Naive thymus-derived CD4-positive, alpha-beta T cell (primary cell): ENCODE measurements at regions of chr19 and their contacts with region 1.

Region 1: DNA sequence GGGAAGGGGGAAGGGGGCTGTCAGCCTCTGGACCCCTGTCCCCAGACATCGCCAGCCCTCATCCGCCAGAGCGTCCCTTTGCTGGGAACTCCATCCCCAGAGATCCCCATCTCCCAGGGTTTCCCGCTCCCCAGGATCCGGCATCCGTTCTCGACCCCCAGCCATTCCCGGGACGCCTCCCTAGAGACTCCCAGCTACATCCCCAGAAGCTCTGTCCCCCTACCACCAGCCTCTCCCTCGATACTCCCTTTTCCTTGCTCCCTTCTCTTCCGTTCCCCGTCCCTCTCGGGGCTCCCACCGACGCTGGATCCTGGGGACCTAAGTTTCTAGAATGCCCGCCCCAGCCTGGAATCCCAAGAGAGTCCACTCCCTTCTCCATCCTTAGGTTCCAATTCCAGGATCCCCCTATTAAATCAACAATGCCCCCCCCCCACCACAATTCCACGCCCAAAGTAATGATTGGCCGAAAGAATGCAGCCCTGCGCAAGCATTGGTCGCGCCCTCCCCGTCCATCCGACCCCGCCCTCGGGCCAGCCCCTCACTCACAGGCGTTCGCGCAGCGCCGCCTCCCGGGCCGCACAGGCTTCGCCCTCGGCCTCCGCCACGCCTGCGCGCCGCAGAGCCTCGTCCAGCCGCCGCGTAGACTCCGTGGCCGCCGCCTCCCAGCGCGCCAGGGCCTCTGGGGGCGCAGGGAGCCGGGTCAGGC is 3.2 kb downstream of the CCDC194 start:
- DNase-seq: peak; percentile 77 to 93 (median 85)
- ATAC-seq: peak; percentile 100
- H3K4me3 ChIP-seq: peak overlapping the region; percentile 84
- H3K4me3 Mint-ChIP-seq: peak overlapping the region; percentile 85 to 98 (median 92)
- H3K27ac ChIP-seq: peak overlapping the region; percentile 2
- H3K27ac Mint-ChIP-seq: peak overlapping the region in 5 of 9 donors; percentile 28 to 92 (median 61)
- H3K4me1 ChIP-seq: peaks cover 15 to 18% of the 10 kb centered on the region in 2 donors
- H3K4me1 Mint-ChIP-seq: peaks cover 6 to 30% (median 20%) of the 10 kb centered on the region in 7 donors
- H3K27me3 ChIP-seq: no peaks in the 10 kb centered on the region
- H3K27me3 Mint-ChIP-seq: peaks cover 0 to 28% (median 0%) of the 10 kb centered on the region in 5 donors

Region 2: GRCh38 chr19:16688084-16688483 is 702.7 kb before region 1 on chr19:
- CTCF ChIA-PET with region 1: no interaction called
- POLR2A ChIA-PET with region 1: no interaction called
- intact Hi-C with region 1: no loop called
- DNase-seq: no peak
- ATAC-seq: no peak
- H3K4me3 ChIP-seq: no peak overlapping the region
- H3K4me3 Mint-ChIP-seq: no peak overlapping the region
- H3K27ac ChIP-seq: no peak overlapping the region
- H3K27ac Mint-ChIP-seq: no peak overlapping the region
- H3K4me1 ChIP-seq: no peaks in the 10 kb centered on the region
- H3K4me1 Mint-ChIP-seq: no peaks in the 10 kb centered on the region
- H3K27me3 ChIP-seq: no peaks in the 10 kb centered on the region
- H3K27me3 Mint-ChIP-seq: no peaks in the 10 kb centered on the region

Region 3: DNA sequence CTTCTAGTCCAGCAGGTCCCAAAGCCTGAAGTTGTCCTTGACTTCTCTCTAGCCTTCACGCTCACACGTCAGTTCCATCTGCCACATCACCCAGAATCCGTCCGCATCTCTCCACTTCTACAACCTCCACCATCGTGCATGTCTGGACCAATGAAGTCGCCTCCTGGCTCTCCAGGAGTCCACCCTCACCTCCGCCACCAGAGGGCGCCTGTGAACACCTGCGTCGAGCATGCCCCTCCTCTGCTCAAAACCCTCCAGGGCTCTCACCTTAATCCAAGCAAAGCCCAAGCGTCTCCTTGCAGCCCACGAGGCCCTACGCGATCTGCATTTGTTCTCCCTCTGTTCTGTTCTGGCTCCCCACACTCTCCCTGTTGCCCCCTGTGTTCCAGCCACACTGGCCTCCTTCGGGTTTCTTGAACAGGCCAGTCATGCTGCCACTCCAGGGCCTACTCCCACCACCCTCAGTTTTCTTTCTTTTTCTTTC is 129.9 kb before region 1 on chr19:
- CTCF ChIA-PET with region 1: interaction called, 7 read pairs
- POLR2A ChIA-PET with region 1: no interaction called
- intact Hi-C with region 1: loop called in 1 of 2 experiments (anchors 1 kb)
- DNase-seq: peak; percentile 76 to 90 (median 86)
- ATAC-seq: peak; percentile 100
- H3K4me3 ChIP-seq: no peak overlapping the region
- H3K4me3 Mint-ChIP-seq: no peak overlapping the region
- H3K27ac ChIP-seq: no peak overlapping the region
- H3K27ac Mint-ChIP-seq: peak overlapping the region in 3 of 9 donors; percentile 2 to 82 (median 24)
- H3K4me1 ChIP-seq: peaks cover 0 to 10% of the 10 kb centered on the region in 2 donors
- H3K4me1 Mint-ChIP-seq: peaks cover 5 to 14% (median 13%) of the 10 kb centered on the region in 7 donors
- H3K27me3 ChIP-seq: no peaks in the 10 kb centered on the region
- H3K27me3 Mint-ChIP-seq: no peaks in the 10 kb centered on the region

Region 4: DNA sequence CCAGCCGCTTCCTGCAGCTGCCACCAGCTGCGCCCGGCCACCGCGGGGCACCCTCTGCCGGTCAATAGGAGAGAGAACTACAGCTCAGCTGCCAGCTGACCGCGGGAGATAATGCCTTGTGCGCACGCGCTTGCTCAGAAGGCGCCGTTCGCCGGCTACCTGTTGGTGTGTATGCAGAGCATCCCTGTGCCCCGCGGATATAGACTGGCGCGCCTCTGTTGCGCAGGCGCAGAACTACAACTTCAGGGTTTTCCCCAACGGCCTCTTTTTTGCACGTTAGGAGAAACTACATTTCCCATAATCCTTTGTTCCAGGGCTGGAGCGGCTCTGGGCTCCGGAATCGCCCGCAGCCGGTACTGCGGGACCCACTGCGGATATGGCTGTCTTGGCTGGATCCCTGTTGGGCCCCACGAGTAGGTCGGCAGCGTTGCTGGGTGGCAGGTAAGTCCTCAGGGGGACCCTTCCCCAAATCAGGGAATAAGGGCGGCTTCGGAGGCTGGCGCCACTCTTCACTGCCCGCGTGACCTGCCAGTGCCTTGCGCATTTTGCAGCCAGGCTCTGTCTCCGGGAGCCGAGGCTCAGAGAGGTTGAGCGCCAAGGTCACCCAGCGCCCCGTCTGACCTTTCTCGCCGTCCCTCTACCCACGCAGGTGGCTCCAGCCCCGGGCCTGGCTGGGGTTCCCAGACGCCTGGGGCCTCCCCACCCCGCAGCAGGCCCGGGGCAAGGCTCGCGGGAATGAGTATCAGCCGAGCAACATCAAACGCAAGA is 85.1 kb before region 1 on chr19 and contains the start of gene MRPL34:
- CTCF ChIA-PET with region 1: interaction called, 4 read pairs
- POLR2A ChIA-PET with region 1: interaction called, 5 read pairs
- intact Hi-C with region 1: loop called in 1 of 2 experiments (anchors 1 kb)
- DNase-seq: peak; percentile 81 to 96 (median 93)
- ATAC-seq: peak; percentile 65
- H3K4me3 ChIP-seq: peak within 1 kb of the TSS; percentile 93
- H3K4me3 Mint-ChIP-seq: peak within 1 kb of the TSS; percentile 82 to 94 (median 90)
- H3K27ac ChIP-seq: peak within 1 kb of the TSS; percentile 81
- H3K27ac Mint-ChIP-seq: peak within 1 kb of the TSS; percentile 82 to 93 (median 90)
- H3K4me1 ChIP-seq: peaks cover 22 to 32% of the 10 kb centered on the region in 2 donors
- H3K4me1 Mint-ChIP-seq: peaks cover 28 to 64% (median 57%) of the 10 kb centered on the region in 7 donors
- H3K27me3 ChIP-seq: no peaks in the 10 kb centered on the region
- H3K27me3 Mint-ChIP-seq: no peaks in the 10 kb centered on the region
- total RNA-seq, gene MRPL34: 37.0 to 76.0 (median 73.3) TPM

Region 5: GRCh38 chr19:17405250-17406038 is 14.6 kb after region 1 on chr19 and contains the start of gene BST2:
- CTCF ChIA-PET with region 1: interaction called, 4 read pairs
- POLR2A ChIA-PET with region 1: interaction called, 3 read pairs
- intact Hi-C with region 1: loop called (anchors 1 kb)
- DNase-seq: peak in 6 of 9 donors; percentile 20 to 69 (median 50)
- ATAC-seq: peak; percentile 90
- H3K4me3 ChIP-seq: peak within 1 kb of the TSS; percentile 81
- H3K4me3 Mint-ChIP-seq: peak within 1 kb of the TSS; percentile 80 to 98 (median 95)
- H3K27ac ChIP-seq: peak within 1 kb of the TSS; percentile 83
- H3K27ac Mint-ChIP-seq: peak within 1 kb of the TSS; percentile 81 to 98 (median 88)
- H3K4me1 ChIP-seq: peaks cover 0 to 12% of the 10 kb centered on the region in 2 donors
- H3K4me1 Mint-ChIP-seq: peaks cover 20 to 47% (median 35%) of the 10 kb centered on the region in 7 donors
- H3K27me3 ChIP-seq: no peaks in the 10 kb centered on the region
- H3K27me3 Mint-ChIP-seq: peaks cover 0 to 2% (median 0%) of the 10 kb centered on the region in 5 donors
- total RNA-seq, gene BST2: 29.9 to 221 (median 57.1) TPM

Region 6: GRCh38 chr19:17448131-17448967 is 57.5 kb after region 1 on chr19 and contains the start of gene TMEM221:
- CTCF ChIA-PET with region 1: interaction called, 4 read pairs
- POLR2A ChIA-PET with region 1: interaction called, 3 read pairs
- intact Hi-C with region 1: loop called in 1 of 2 experiments (anchors 1 kb)
- DNase-seq: peak; percentile 37 to 67 (median 50)
- ATAC-seq: peak; percentile 89
- H3K4me3 ChIP-seq: peak within 1 kb of the TSS; percentile 39
- H3K4me3 Mint-ChIP-seq: peak within 1 kb of the TSS in 9 of 10 donors; percentile 16 to 68 (median 58)
- H3K27ac ChIP-seq: no peak within 1 kb of the TSS
- H3K27ac Mint-ChIP-seq: no peak within 1 kb of the TSS
- H3K4me1 ChIP-seq: no peaks in the 10 kb centered on the region
- H3K4me1 Mint-ChIP-seq: peaks cover 0 to 16% (median 10%) of the 10 kb centered on the region in 7 donors
- H3K27me3 ChIP-seq: no peaks in the 10 kb centered on the region
- H3K27me3 Mint-ChIP-seq: peaks cover 2 to 26% (median 8%) of the 10 kb centered on the region in 5 donors
- total RNA-seq, gene TMEM221: not detected